ENCODE measurements at regions of chr9 and their contacts with region 1.

Region 1: DNA sequence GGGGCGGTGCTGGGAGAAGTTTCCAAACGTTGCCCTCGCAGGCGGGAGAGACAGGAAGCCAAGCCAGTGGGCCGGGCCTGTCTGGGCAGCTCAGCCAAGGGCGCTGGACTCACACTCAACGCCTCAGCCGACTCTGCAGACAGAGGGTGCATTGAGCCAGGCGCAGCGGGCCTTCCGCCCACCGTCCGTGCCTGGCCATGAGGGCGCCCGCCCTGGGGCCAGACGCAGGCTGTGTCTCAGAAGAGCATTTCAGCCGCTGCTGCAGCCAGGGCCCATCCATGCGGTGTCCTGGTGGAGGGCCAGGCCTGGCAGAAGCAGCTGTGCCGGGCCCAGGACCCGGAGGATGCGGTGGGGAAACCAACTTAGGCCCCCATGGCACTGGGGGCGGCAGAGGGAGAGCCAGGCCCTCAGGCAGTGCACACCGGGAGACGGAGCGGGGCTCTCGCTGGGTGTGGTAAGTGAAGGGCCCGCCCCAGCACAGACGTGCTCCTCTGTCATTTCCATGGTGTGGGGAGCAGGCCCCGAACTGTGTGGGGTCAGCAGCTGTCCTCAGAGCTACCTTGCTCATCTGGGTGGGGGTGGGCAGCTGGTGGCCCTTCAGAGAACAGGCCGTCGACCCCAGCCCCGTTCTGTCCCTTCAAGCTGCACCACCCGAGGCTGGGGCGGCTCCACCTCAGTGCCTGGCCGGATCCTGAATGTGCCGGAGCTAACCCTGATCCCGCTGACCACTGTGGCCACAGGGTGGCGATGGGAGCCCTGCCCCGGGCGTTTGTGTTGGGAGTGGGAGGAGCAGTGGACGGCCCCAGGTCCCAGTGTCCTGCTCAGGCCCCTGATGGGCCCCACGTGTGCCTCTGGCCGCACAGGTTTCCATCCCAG is 18.0 kb downstream of the DNLZ start:
- DNase-seq: no peak
- H3K4me3 ChIP-seq: no peak overlapping the region
- H3K27me3 ChIP-seq: no peaks in the 10 kb centered on the region
- CTCF ChIP-seq: peak; percentile 71

Region 2: DNA sequence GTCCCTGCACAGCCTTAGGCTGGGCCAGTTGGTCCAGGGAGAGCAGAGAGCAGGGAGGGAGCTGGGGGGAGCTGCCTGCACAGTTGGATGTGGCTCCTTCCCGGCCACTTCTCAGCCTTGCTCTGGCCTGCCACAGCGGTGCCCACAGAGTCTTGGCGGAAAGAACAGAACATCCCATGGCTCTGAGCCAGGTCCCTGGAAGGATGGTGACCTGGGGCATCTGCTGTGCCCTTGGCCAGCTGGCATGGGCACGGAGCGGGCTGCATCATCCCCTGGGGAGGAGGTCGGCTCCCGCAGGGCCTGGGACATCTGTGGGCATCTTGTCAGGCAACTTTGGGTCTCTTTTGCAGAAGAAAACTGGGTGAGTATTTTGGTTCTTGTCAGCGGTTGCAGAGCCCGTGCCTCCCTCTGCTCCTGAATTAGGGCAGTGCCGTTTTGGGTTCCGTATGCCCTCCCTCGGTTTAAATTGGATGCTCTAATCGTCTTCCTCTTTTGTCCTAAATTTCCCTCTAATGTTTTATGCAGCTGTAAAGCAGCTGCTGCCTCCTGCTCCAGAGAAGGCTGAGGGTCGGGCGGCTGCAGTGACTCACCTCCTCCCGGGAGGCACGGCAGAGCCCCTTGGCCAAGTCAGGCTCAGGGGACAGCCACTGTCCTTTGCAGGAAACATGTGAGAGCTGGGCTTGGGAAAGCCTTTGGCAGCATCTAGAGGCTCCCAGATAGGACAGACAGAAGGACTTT is 240.0 kb before region 1 on chr9:
- CTCF ChIA-PET with region 1: no interaction called
- POLR2A ChIA-PET with region 1: no interaction called
- DNase-seq: no peak
- H3K4me3 ChIP-seq: no peak overlapping the region
- H3K27me3 ChIP-seq: no peaks in the 10 kb centered on the region
- CTCF ChIP-seq: no peak

Region 3: GRCh38 chr9:136204838-136205706 is 140.4 kb before region 1 on chr9 and contains the start of gene LHX3:
- CTCF ChIA-PET with region 1: no interaction called
- POLR2A ChIA-PET with region 1: no interaction called
- DNase-seq: no peak
- H3K4me3 ChIP-seq: no peak within 1 kb of the TSS
- H3K27me3 ChIP-seq: peaks cover 35% of the 10 kb centered on the region
- CTCF ChIP-seq: no peak
- polyA plus RNA-seq, gene LHX3: not detected in 2 replicates

Region 4: GRCh38 chr9:136327313-136327974 is 18.1 kb before region 1 on chr9 and contains the start of gene GPSM1:
- CTCF ChIA-PET with region 1: interaction called, 16 read pairs
- POLR2A ChIA-PET with region 1: no interaction called
- DNase-seq: no peak
- H3K4me3 ChIP-seq: peak within 1 kb of the TSS; percentile 88
- H3K27me3 ChIP-seq: no peaks in the 10 kb centered on the region
- CTCF ChIP-seq: no peak
- polyA plus RNA-seq, gene GPSM1: 19.2 and 33.1 TPM in 2 replicates

Region 5: GRCh38 chr9:136363606-136364370 is 18.3 kb after region 1 on chr9 and contains the start of gene DNLZ:
- CTCF ChIA-PET with region 1: interaction called, 42 read pairs
- POLR2A ChIA-PET with region 1: no interaction called
- DNase-seq: no peak
- H3K4me3 ChIP-seq: peak within 1 kb of the TSS; percentile 78
- H3K27me3 ChIP-seq: no peaks in the 10 kb centered on the region
- CTCF ChIP-seq: peak; percentile 75
- polyA plus RNA-seq, gene DNLZ: 7.2 and 8.5 TPM in 2 replicates

Measured in BJ (cell line).